Activated CD4-positive, alpha-beta memory T cell treated with anti-CD3 and anti-CD28 coated beads for 36 hours (primary cell): ENCODE measurements at regions of chr3 and their contacts with region 1.

Region 1: GRCh38 chr3:188788621-188789081 is 383.1 kb upstream of the TPRG1 start:
- DNase-seq: peak; percentile 88
- H3K4me3 Mint-ChIP-seq: no peak overlapping the region
- H3K27ac Mint-ChIP-seq: no peak overlapping the region
- H3K4me1 Mint-ChIP-seq: peaks cover 2% of the 10 kb centered on the region
- H3K27me3 Mint-ChIP-seq: no peaks in the 10 kb centered on the region

Region 2: GRCh38 chr3:187802928-187803259 is 985.8 kb before region 1 on chr3:
- CTCF ChIA-PET with region 1: interaction called, 3 read pairs
- POLR2A ChIA-PET with region 1: no interaction called
- intact Hi-C with region 1: loop called (anchors 2 kb)
- DNase-seq: peak; percentile 89
- H3K4me3 Mint-ChIP-seq: peak overlapping the region; percentile 54
- H3K27ac Mint-ChIP-seq: peak overlapping the region; percentile 95
- H3K4me1 Mint-ChIP-seq: peaks cover 96% of the 10 kb centered on the region
- H3K27me3 Mint-ChIP-seq: no peaks in the 10 kb centered on the region

Region 3: GRCh38 chr3:188286087-188286513 is 502.6 kb before region 1 on chr3:
- CTCF ChIA-PET with region 1: no interaction called
- POLR2A ChIA-PET with region 1: no interaction called
- intact Hi-C with region 1: loop called (anchors 1 kb)
- DNase-seq: peak; percentile 42
- H3K4me3 Mint-ChIP-seq: no peak overlapping the region
- H3K27ac Mint-ChIP-seq: peak overlapping the region; percentile 34
- H3K4me1 Mint-ChIP-seq: peaks cover 51% of the 10 kb centered on the region
- H3K27me3 Mint-ChIP-seq: no peaks in the 10 kb centered on the region

Region 4: DNA sequence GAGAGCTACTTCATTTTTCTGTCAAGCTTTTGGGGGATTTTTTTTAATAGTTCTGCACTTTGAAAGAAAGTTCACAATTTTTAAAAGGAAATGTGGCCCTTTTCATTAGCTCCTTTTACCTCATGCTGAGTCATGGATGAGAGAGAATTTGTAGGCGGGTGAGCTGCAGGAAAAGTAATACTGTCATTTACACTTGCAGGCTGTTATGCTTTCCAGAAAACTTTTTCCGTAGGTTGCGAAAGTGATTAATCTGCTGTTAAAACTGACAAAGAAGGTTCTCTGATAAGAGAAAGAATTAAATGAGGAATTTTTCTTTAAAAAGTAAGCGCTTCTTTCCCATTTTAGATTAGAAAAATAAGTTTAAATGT is 204.5 kb before region 1 on chr3:
- CTCF ChIA-PET with region 1: no interaction called
- POLR2A ChIA-PET with region 1: interaction called, 3 read pairs
- intact Hi-C with region 1: loop called (anchors 1 kb)
- DNase-seq: peak; percentile 31
- H3K4me3 Mint-ChIP-seq: no peak overlapping the region
- H3K27ac Mint-ChIP-seq: no peak overlapping the region
- H3K4me1 Mint-ChIP-seq: peaks cover 13% of the 10 kb centered on the region
- H3K27me3 Mint-ChIP-seq: no peaks in the 10 kb centered on the region

Region 5: GRCh38 chr3:188749010-188749617 is 39.5 kb before region 1 on chr3:
- CTCF ChIA-PET with region 1: interaction called, 8 read pairs
- POLR2A ChIA-PET with region 1: interaction called, 8 read pairs
- intact Hi-C with region 1: loop called (anchors 1 kb)
- DNase-seq: peak; percentile 56
- H3K4me3 Mint-ChIP-seq: no peak overlapping the region
- H3K27ac Mint-ChIP-seq: no peak overlapping the region
- H3K4me1 Mint-ChIP-seq: peaks cover 29% of the 10 kb centered on the region
- H3K27me3 Mint-ChIP-seq: no peaks in the 10 kb centered on the region

Region 6: GRCh38 chr3:189041482-189042090 is 252.9 kb after region 1 on chr3:
- CTCF ChIA-PET with region 1: interaction called, 3 read pairs
- POLR2A ChIA-PET with region 1: no interaction called
- intact Hi-C with region 1: loop called (anchors 1 kb)
- DNase-seq: peak; percentile 86
- H3K4me3 Mint-ChIP-seq: no peak overlapping the region
- H3K27ac Mint-ChIP-seq: peak overlapping the region; percentile 23
- H3K4me1 Mint-ChIP-seq: peaks cover 37% of the 10 kb centered on the region
- H3K27me3 Mint-ChIP-seq: no peaks in the 10 kb centered on the region